Activated CD8-positive, alpha-beta T cell treated with anti-CD3 and anti-CD28 coated beads, Interleukin-2, amount 10 ng/mL, durations not matched to agents 7 days and 5 days (primary cell): ENCODE measurements at regions of chr1 and their contacts with region 1.

Region 1: DNA sequence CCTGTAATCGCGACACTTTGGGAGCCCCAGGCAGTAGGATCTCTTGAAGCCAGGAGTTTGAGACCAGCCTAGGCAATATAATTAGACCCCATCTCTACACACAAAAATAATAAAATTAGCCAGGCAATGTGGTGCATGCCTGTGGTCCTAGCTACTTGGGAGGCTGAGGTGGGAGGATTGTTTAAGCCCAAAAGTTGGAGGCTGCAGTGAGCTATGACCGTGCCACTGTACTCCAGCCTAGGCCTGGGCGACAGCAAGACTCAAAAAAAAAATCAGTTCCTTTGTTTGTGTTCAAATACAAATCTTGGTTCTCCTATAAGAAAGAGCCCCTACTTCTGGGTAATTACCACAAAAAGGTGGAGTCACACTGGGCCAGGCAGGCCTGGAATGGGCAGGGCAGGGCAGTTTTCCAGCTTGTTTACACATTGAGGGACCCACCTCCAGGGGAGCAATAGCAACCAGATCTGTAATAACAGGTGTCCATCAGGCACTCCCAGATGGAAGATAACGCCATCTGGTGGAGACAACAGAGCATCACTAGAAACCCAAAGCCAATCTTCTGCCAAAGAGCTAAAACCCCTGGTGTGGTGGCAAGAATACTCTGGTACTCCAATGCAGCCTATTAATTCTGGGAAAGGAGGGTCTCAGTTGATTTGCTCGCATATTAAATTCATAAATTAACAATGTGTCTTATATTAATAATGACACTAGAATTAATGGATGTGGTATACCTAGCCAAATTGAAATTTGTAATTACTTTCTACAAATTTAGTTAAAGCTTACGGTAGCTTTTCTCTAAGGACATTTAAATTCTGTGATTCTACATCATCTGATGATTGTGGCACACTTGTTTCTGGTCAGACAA is 13.2 kb downstream of the PPP1R15B start:
- DNase-seq: peak; percentile 73
- ATAC-seq: peak; percentile 83
- H3K4me3 Mint-ChIP-seq: no peak overlapping the region
- H3K27ac Mint-ChIP-seq: peak overlapping the region; percentile 65
- H3K4me1 Mint-ChIP-seq: peaks cover 2% of the 10 kb centered on the region
- H3K27me3 Mint-ChIP-seq: no peaks in the 10 kb centered on the region

Region 2: DNA sequence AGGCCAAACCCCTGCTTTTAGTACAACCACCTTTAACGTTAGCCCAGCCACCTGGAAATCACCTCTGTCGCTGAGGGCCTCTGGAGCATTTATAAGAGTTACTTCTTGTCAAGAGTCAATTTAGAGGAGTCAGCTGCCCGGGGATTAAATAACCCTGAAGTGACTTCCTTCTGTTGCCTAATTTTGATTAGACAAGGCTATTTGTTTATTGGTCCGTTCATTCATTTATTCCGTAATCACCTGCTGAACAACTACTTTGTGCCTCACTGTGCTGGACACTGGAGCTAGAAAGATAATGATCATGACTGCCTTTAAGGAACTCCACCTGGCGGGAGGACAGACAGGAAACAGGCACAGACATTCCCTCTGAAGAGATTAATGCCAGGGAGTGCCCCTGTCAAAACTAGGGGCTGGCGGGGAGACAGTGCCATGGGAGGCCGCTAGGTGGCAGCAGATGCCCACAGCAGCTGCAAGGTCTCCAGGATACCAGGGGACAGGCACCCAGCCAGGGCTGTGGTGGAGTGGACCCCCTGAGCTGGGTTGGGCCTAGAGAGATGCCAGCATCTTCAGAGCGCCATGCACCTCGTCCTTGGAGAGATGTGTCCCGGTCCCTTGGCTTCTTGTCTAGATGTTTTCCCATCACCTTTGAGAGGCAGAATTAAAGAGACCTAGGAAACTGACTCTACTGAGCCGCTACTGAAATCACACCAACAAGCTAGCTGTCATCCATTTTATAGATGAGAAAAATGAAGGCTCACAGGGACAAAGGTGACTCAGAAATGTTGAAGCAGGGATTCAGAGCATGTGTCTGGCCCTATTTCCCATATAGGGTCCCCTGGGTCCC is 236.0 kb before region 1 on chr1:
- CTCF ChIA-PET with region 1: interaction called, 20 read pairs
- POLR2A ChIA-PET with region 1: no interaction called
- DNase-seq: peak; percentile 81
- ATAC-seq: peak; percentile 94
- H3K4me3 Mint-ChIP-seq: no peak overlapping the region
- H3K27ac Mint-ChIP-seq: no peak overlapping the region
- H3K4me1 Mint-ChIP-seq: no peaks in the 10 kb centered on the region
- H3K27me3 Mint-ChIP-seq: peaks cover 6% of the 10 kb centered on the region

Region 3: GRCh38 chr1:204213668-204214662 is 184.5 kb before region 1 on chr1 and contains the start of gene GOLT1A:
- CTCF ChIA-PET with region 1: interaction called, 15 read pairs
- POLR2A ChIA-PET with region 1: no interaction called
- DNase-seq: peak; percentile 54
- ATAC-seq: peak; percentile 73
- H3K4me3 Mint-ChIP-seq: peak within 1 kb of the TSS; percentile 12
- H3K27ac Mint-ChIP-seq: no peak within 1 kb of the TSS
- H3K4me1 Mint-ChIP-seq: peaks cover 16% of the 10 kb centered on the region
- H3K27me3 Mint-ChIP-seq: peaks cover 15% of the 10 kb centered on the region
- total RNA-seq, gene GOLT1A: not detected

Region 4: DNA sequence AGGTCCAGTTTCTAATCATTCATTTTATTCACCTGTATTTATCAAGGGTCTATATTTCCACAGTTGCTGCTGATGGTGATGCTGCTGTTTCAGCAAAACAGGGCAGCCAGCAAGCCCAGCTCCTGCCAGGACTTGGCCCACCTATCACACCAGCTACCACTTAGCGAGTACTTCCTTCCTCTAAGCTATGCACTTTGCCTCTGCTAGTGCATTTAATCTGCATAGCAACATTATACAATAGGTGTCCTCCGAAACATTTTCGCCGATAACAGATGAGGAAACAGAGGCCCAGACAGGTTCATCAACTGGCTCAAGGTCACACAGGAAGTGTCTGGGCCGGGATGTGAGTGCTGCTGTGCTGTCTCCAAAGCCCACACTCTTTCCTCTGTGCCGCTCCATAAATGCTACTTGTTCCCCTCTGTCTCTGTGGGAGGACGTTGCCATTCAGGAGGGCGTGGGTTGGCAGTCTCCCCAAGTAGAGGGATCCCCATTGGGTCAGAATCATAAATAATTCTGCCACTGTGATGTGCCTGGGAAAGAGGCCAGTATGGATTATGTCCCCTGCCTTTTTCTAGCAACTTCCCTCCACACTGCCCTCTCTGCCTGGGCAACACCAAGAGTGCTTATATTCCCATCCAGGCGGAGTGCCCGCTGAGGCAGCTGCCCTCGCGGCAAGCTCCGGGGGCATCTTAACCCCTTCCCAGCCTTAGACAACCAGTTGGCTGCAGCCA is 29.3 kb before region 1 on chr1:
- CTCF ChIA-PET with region 1: interaction called, 74 read pairs
- POLR2A ChIA-PET with region 1: no interaction called
- DNase-seq: no peak
- ATAC-seq: no peak
- H3K4me3 Mint-ChIP-seq: no peak overlapping the region
- H3K27ac Mint-ChIP-seq: no peak overlapping the region
- H3K4me1 Mint-ChIP-seq: no peaks in the 10 kb centered on the region
- H3K27me3 Mint-ChIP-seq: peaks cover 10% of the 10 kb centered on the region

Region 5: GRCh38 chr1:204384994-204385352 is 13.5 kb before region 1 on chr1:
- CTCF ChIA-PET with region 1: interaction called, 122 read pairs
- POLR2A ChIA-PET with region 1: interaction called, 4 read pairs
- DNase-seq: no peak
- ATAC-seq: no peak
- H3K4me3 Mint-ChIP-seq: no peak overlapping the region
- H3K27ac Mint-ChIP-seq: no peak overlapping the region
- H3K4me1 Mint-ChIP-seq: peaks cover 5% of the 10 kb centered on the region
- H3K27me3 Mint-ChIP-seq: peaks cover 5% of the 10 kb centered on the region

Region 6: DNA sequence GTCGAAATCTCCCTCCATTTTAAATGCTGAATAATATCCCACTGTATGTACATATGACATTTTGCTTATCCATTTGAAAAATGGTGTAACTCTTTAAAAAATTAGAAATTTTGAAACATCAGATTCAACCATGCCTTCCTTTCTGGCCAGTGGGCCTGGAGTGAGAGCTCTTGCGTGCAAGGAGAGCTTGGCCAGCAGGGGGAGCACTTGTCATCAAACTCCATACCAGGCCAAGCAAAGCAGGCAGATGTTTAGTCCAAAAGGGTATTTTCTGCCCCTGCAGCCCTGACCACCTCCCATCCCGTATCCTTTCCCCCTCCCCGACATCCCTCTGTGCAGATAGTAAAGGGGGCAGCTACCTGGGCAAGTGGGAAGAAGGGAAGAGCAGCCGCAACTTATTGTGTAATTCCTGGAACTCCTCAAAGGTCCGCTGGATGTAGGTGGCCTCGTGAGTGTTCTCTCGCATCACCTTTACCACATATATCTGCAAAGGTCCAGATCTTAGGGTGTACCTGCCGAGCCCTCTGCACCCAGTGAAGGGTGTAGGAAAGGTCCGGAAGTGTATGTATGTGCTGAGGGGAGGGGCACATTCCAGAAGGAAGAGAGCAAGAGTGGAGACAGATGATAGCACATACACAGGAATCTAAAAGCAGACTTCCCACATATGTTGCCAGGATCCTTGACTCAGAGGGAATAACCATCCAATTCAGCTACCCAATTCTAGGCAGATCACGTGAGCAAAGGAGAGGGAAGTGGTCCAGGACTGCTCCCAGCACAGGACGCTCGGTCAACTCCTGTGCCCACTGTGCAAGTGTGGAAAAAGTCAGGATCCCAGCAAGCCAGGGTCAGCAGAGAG is 33.1 kb after region 1 on chr1:
- CTCF ChIA-PET with region 1: interaction called, 10 read pairs
- POLR2A ChIA-PET with region 1: no interaction called
- DNase-seq: peak; percentile 86
- ATAC-seq: peak; percentile 93
- H3K4me3 Mint-ChIP-seq: no peak overlapping the region
- H3K27ac Mint-ChIP-seq: no peak overlapping the region
- H3K4me1 Mint-ChIP-seq: no peaks in the 10 kb centered on the region
- H3K27me3 Mint-ChIP-seq: no peaks in the 10 kb centered on the region

Region 7: GRCh38 chr1:204494281-204495077 is 96.0 kb after region 1 on chr1 and contains the start of gene PIK3C2B:
- CTCF ChIA-PET with region 1: interaction called, 44 read pairs
- POLR2A ChIA-PET with region 1: interaction called, 3 read pairs
- DNase-seq: peak; percentile 80
- ATAC-seq: peak; percentile 86
- H3K4me3 Mint-ChIP-seq: peak within 1 kb of the TSS; percentile 77
- H3K27ac Mint-ChIP-seq: peak within 1 kb of the TSS; percentile 89
- H3K4me1 Mint-ChIP-seq: peaks cover 58% of the 10 kb centered on the region
- H3K27me3 Mint-ChIP-seq: peaks cover 2% of the 10 kb centered on the region
- total RNA-seq, gene PIK3C2B: 26.2 to 28.4 TPM